Left ventricle myocardium superior (tissue), 1 donor: ENCODE measurements at regions of chr12 and their contacts with region 1.

Region 1: DNA sequence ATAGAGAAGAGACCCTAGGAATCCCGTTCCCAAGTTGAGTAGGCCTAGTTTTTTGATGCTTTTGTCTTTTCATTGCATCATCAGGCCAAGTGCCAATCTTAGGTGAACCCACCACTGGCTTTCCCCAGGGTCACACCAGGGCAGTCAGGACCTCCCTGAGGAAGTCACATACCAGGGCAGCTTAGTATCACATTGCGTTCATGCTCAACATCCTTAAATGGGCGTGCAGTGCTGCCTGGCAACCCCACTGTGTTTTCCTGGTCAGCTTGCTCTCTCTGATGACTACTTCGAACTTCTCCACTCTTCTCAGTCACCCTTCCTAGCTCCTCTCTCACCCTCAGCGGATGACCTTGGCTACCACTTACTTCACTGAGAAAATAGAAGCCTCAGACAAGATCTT is 9.0 kb downstream of the ASIC1 start:
- DNase-seq: no peak
- ATAC-seq: peak; percentile 55

Region 2: DNA sequence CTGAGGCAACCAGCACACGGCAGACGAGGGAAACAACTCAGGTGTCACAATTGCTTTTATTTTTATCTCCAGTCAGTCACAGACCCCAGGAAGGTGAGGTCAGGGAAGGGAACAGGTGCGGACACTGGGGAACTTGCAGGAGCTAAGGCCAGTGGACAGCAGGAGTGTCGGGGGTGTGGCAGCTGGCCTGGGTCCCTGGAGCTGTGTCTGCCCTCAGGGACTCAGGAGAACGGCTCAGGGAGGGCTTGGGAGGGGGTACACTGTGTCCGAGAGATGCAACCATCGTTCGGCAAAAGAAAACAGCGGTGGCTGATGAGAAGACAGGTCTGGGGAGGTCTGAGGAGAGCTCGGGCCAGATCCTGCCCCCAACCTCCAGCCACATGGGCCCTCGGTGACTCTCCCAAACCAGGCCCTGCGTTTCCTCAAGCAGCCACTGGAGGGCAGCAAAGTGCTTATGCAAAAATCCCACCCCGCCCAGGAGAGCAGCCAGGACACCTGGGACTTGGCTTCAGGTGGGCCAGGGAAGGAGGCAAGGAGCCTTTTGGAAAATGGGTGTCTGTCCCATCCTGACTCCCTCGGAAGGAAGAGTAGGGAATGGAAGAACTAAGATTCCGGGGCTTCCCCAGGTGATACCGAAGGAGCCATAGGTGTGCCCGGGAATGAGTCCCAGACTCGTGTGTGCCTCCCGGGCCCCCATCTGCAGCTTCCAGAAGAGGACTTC is 199.4 kb before region 1 on chr12:
- intact Hi-C with region 1: loop called (anchors 10 kb)
- DNase-seq: peak; percentile 84
- ATAC-seq: peak; percentile 26

Region 3: GRCh38 chr12:50025187-50026059 is 41.0 kb before region 1 on chr12 and contains the start of gene RACGAP1:
- intact Hi-C with region 1: no loop called
- DNase-seq: peak; percentile 93
- ATAC-seq: peak; percentile 99
- total RNA-seq, gene RACGAP1: 3.4 TPM

Region 4: GRCh38 chr12:50162230-50162629 is 95.8 kb after region 1 on chr12:
- intact Hi-C with region 1: loop called (anchors 5 kb)
- DNase-seq: no peak
- ATAC-seq: no peak